Mammary epithelial cell (primary cell): ENCODE measurements at regions of chr1 and their contacts with region 1.

Region 1: DNA sequence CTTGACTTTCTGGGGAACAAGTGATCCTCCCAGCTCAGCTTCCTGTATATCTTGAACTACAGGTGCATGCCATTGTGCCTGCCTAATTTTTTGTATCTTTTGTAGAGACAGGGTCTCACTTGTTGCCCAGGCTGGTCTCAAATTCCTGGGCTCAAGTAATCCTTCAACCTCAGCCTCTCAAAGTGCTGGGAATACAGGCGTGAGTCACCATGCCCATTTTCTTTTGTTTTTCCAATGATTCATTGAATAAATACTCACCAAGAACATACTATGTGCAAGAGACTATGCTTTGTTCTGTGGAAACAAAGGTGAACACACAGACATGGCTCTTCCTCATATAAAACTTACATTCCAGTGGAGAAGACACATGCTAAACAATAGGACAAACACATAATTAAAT is 407.8 kb upstream of the DAB1 start:
- DNase-seq: peak; percentile 89
- H3K4me3 ChIP-seq: no peak overlapping the region
- H3K27ac ChIP-seq: no peak overlapping the region
- H3K4me1 ChIP-seq: peaks cover 40% of the 10 kb centered on the region
- H3K27me3 ChIP-seq: no peaks in the 10 kb centered on the region
- CTCF ChIP-seq: no peak

Region 2: DNA sequence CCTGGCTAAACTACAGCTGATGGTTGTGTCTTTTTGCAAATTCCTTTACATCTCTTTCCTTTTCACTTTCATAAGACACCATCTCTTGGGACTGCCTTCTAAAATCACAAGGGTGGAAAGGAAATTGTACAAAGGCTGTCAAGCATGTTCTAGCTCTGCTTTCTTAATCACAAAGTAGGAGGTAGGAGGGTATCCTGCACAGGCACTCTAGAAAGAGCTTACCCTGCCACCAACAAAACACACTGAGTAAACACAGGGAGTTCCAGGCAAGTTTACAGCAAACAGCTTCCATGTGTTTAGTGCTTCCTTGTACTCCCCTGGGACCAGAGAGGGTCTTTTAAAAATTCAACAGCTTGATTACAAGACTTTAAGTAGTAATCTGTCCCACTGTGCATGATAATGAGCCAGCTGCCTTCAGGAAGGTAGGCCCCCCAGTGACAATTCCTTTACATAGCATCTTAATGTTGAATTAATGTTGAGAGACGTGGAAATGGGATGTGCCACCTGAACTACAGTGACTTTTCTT is 1254.7 kb before region 1 on chr1:
- CTCF ChIA-PET with region 1: no interaction called
- dilution Hi-C with region 1: no loop called
- in situ Hi-C with region 1: no loop called
- intact Hi-C with region 1: no loop called
- DNase-seq: peak; percentile 14
- H3K4me3 ChIP-seq: no peak overlapping the region
- H3K27ac ChIP-seq: no peak overlapping the region
- H3K4me1 ChIP-seq: peaks cover 7% of the 10 kb centered on the region
- H3K27me3 ChIP-seq: no peaks in the 10 kb centered on the region
- CTCF ChIP-seq: peak; percentile 25 to 50

Region 3: GRCh38 chr1:57976216-57976615 is 144.6 kb after region 1 on chr1:
- CTCF ChIA-PET with region 1: interaction called, 3 read pairs
- dilution Hi-C with region 1: no loop called
- in situ Hi-C with region 1: no loop called
- intact Hi-C with region 1: loop called (anchors 5 kb)
- DNase-seq: no peak
- H3K4me3 ChIP-seq: no peak overlapping the region
- H3K27ac ChIP-seq: no peak overlapping the region
- H3K4me1 ChIP-seq: no peaks in the 10 kb centered on the region
- H3K27me3 ChIP-seq: no peaks in the 10 kb centered on the region
- CTCF ChIP-seq: peak in 1 of 2 donors; percentile 37

Region 4: DNA sequence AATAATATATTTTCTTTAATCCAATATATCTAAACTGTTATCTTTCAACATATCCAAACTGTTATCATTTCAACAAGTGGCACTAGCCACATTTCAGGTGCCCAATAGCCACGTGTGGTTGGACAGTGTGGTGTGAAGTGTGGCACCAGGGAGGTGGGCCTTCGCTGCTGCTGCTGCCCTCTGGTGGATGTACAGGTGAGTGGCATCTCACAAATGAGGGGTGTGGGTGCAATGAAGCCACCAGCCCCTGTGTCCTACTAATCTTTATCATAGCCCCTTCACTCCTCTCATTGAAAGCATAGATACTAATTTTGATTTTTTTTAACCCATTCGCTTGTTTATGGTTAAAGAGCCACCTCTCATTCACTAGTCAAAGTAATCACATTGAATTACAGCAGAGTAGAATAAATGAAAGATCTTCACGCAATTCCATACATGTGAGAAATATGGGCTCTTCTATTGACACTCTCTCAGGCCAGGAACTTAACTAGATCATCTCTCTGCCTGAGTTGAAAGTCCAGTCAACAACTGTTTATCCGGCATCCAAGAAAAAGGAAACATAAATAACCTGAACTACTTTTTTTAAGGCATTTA is 215.7 kb after region 1 on chr1:
- CTCF ChIA-PET with region 1: no interaction called
- dilution Hi-C with region 1: no loop called
- in situ Hi-C with region 1: no loop called
- intact Hi-C with region 1: loop called (anchors 1 kb)
- DNase-seq: no peak
- H3K4me3 ChIP-seq: no peak overlapping the region
- H3K27ac ChIP-seq: no peak overlapping the region
- H3K4me1 ChIP-seq: peaks cover under 1% of the 10 kb centered on the region
- H3K27me3 ChIP-seq: peaks cover 6% of the 10 kb centered on the region
- CTCF ChIP-seq: peak; percentile 79 to 85